Endothelial cell of umbilical vein (primary cell): ENCODE measurements at regions of chr6 and their contacts with region 1.

Region 1: GRCh38 chr6:158559895-158560835 is at the start of gene TMEM181:
- DNase-seq: peak; percentile 80
- H3K4me3 ChIP-seq: peak within 1 kb of the TSS; percentile 40 to 73 (median 53)
- H3K27ac ChIP-seq: peak within 1 kb of the TSS; percentile 82
- H3K4me1 ChIP-seq: peaks cover 45% of the 10 kb centered on the region
- H3K27me3 ChIP-seq: no peaks in the 10 kb centered on the region
- CTCF ChIP-seq: no peak
- POLR2A ChIP-seq: peak; percentile 86
- total RNA-seq, gene TMEM181: 33.5 and 34.5 TPM in 2 replicates

Region 2: DNA sequence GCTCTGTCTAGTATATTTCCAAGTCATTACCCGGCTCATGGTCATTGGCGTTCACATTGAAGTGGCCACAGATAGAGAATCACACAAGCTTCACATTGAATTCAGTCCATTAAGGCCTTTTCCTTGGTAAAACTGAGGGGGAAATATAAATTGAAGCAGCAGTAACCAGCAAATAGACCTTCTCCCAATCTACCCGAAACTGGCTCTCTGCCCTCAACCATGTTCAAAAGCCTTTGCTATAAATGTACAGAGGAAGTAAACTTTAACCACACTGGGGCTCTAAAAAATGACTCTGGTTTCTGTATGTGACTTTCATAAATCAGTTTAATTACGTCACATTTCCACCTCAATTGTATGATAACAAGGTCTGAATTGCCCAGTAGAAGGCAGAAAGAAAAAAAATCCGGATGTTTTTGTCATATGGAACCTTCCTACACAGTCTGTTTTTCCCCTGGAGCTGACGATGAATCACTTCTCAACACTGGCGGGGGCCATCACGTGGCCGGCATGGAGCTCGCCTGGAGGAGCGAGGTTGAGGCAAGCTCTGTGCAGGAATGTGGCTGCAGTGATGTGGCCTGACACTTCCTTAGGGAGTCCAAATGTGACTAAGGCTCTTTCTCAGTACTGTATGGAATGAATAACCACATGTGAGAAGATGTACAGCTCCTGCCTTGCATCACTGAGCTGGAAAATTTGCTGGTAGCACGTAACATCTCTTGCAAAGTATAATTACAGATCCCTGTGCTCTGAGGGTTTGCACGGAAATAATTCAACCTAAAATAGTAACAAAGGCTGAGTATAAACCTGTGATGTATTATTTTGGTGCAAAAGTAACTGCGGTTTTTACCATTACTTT is 795.8 kb before region 1 on chr6:
- CTCF ChIA-PET with region 1: no interaction called
- POLR2A ChIA-PET with region 1: no interaction called
- dilution Hi-C with region 1: no loop called
- intact Hi-C with region 1: loop called (anchors 5 kb)
- DNase-seq: peak; percentile 99
- H3K4me3 ChIP-seq: peak overlapping the region in 1 of 3 experiments; percentile 4
- H3K27ac ChIP-seq: peak overlapping the region; percentile 97
- H3K4me1 ChIP-seq: peaks cover 51% of the 10 kb centered on the region
- H3K27me3 ChIP-seq: no peaks in the 10 kb centered on the region
- CTCF ChIP-seq: no peak
- POLR2A ChIP-seq: no peak

Region 3: GRCh38 chr6:158595223-158595622 is 35.1 kb after region 1 on chr6:
- CTCF ChIA-PET with region 1: interaction called, 3 read pairs
- POLR2A ChIA-PET with region 1: no interaction called
- dilution Hi-C with region 1: no loop called
- intact Hi-C with region 1: loop called (anchors 2 kb)
- DNase-seq: peak; percentile 24
- H3K4me3 ChIP-seq: no peak overlapping the region
- H3K27ac ChIP-seq: no peak overlapping the region
- H3K4me1 ChIP-seq: peaks cover 3% of the 10 kb centered on the region
- H3K27me3 ChIP-seq: no peaks in the 10 kb centered on the region
- CTCF ChIP-seq: peak; percentile 27 to 38
- POLR2A ChIP-seq: no peak

Region 4: GRCh38 chr6:158605266-158605878 is 45.2 kb after region 1 on chr6:
- CTCF ChIA-PET with region 1: interaction called, 8 read pairs
- POLR2A ChIA-PET with region 1: no interaction called
- dilution Hi-C with region 1: no loop called
- intact Hi-C with region 1: loop called (anchors 1 kb)
- DNase-seq: peak; percentile 85
- H3K4me3 ChIP-seq: no peak overlapping the region
- H3K27ac ChIP-seq: no peak overlapping the region
- H3K4me1 ChIP-seq: no peaks in the 10 kb centered on the region
- H3K27me3 ChIP-seq: no peaks in the 10 kb centered on the region
- CTCF ChIP-seq: peak; percentile 68 to 72
- POLR2A ChIP-seq: no peak

Region 5: GRCh38 chr6:158631678-158632537 is 71.7 kb after region 1 on chr6:
- CTCF ChIA-PET with region 1: no interaction called
- POLR2A ChIA-PET with region 1: no interaction called
- dilution Hi-C with region 1: no loop called
- intact Hi-C with region 1: no loop called
- DNase-seq: peak; percentile 97
- H3K4me3 ChIP-seq: peak overlapping the region in 1 of 3 experiments; percentile 25
- H3K27ac ChIP-seq: peak overlapping the region; percentile 90
- H3K4me1 ChIP-seq: peaks cover 27% of the 10 kb centered on the region
- H3K27me3 ChIP-seq: no peaks in the 10 kb centered on the region
- CTCF ChIP-seq: no peak
- POLR2A ChIP-seq: peak; percentile 45

Region 6: GRCh38 chr6:158644231-158645063 is 84.3 kb after region 1 on chr6 and contains the start of gene DYNLT1:
- CTCF ChIA-PET with region 1: no interaction called
- POLR2A ChIA-PET with region 1: no interaction called
- dilution Hi-C with region 1: no loop called
- intact Hi-C with region 1: loop called (anchors 5 kb)
- DNase-seq: peak; percentile 92
- H3K4me3 ChIP-seq: peak within 1 kb of the TSS; percentile 74 to 92 (median 85)
- H3K27ac ChIP-seq: peak within 1 kb of the TSS; percentile 92
- H3K4me1 ChIP-seq: peaks cover 28% of the 10 kb centered on the region
- H3K27me3 ChIP-seq: no peaks in the 10 kb centered on the region
- CTCF ChIP-seq: no peak
- POLR2A ChIP-seq: peak; percentile 91
- total RNA-seq, gene DYNLT1: 162 TPM in 2 replicates